ENCODE measurements at regions of chr3 and their contacts with region 1.

Region 1: DNA sequence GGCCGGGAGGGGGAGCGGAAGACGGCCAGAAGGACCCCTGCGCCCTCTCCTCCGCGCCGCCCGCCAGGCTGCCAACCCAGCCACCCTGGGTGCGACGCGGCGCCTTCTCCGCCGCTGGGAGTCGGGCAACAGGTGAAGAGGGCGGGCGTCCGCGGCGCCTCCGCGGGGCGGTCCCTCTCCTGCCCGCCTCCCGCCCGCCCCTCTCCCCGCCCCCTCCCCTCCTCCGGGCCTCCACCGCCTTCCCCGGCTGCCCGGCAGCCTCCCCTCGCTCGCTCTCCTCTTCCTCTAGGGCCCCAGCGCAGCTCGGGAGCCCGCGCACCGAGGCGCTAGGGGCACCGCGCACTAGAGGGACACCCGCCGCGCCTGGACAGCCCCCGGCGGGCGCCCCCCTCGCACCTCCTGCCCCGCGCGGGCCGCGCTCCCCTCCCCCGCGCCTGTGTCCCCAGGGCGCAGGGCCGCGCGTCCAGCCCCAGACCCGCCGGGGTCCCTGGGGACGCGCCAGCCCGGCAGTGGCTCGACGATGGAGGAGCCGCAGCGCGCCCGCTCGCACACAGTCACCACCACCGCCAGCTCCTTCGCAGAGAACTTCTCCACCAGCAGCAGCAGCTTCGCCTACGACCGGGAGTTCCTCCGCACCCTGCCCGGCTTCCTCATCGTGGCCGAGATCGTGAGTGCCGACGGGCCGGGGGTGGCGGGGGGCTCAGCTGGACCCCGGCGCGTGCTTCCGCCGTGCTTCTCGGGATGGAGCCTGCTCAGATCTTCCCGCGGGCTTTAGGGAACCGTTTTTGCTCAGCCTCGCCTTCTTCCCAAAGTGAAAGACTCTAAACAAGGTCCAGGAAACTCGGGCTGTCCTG is at the start of gene CMTM8:
- DNase-seq: peak; percentile 57
- H3K4me3 ChIP-seq: peak within 1 kb of the TSS; percentile 61 to 74 (median 72)
- H3K27ac ChIP-seq: no peak within 1 kb of the TSS
- H3K4me1 ChIP-seq: peaks cover 11% of the 10 kb centered on the region
- H3K27me3 ChIP-seq: no peaks in the 10 kb centered on the region
- CTCF ChIP-seq: no peak
- total RNA-seq, gene CMTM8: 0.67 to 2.9 TPM

Region 2: GRCh38 chr3:32184187-32184730 is 54.4 kb before region 1 on chr3:
- CTCF ChIA-PET with region 1: no interaction called
- dilution Hi-C with region 1: loop called (anchors 5 kb)
- in situ Hi-C with region 1: no loop called
- intact Hi-C with region 1: no loop called
- DNase-seq: peak; percentile 53
- H3K4me3 ChIP-seq: no peak overlapping the region
- H3K27ac ChIP-seq: no peak overlapping the region
- H3K4me1 ChIP-seq: no peaks in the 10 kb centered on the region
- H3K27me3 ChIP-seq: no peaks in the 10 kb centered on the region
- CTCF ChIP-seq: no peak

Measured in mammary epithelial cell (primary cell).